ENCODE measurements at regions of chr11 and their contacts with region 1.

Region 1: GRCh38 chr11:94968334-94968958 is 4.9 kb downstream of the CWC15 start:
- DNase-seq: no peak
- ATAC-seq: peak in 1 of 4 donors; percentile 42
- H3K4me3 ChIP-seq: no peak overlapping the region
- H3K27ac ChIP-seq: no peak overlapping the region
- H3K4me1 ChIP-seq: peaks cover 0 to 10% (median 6%) of the 10 kb centered on the region in 4 donors
- H3K27me3 ChIP-seq: no peaks in the 10 kb centered on the region
- CTCF ChIP-seq: peak; percentile 47 to 62 (median 58)
- POLR2A ChIP-seq: no peak

Region 2: DNA sequence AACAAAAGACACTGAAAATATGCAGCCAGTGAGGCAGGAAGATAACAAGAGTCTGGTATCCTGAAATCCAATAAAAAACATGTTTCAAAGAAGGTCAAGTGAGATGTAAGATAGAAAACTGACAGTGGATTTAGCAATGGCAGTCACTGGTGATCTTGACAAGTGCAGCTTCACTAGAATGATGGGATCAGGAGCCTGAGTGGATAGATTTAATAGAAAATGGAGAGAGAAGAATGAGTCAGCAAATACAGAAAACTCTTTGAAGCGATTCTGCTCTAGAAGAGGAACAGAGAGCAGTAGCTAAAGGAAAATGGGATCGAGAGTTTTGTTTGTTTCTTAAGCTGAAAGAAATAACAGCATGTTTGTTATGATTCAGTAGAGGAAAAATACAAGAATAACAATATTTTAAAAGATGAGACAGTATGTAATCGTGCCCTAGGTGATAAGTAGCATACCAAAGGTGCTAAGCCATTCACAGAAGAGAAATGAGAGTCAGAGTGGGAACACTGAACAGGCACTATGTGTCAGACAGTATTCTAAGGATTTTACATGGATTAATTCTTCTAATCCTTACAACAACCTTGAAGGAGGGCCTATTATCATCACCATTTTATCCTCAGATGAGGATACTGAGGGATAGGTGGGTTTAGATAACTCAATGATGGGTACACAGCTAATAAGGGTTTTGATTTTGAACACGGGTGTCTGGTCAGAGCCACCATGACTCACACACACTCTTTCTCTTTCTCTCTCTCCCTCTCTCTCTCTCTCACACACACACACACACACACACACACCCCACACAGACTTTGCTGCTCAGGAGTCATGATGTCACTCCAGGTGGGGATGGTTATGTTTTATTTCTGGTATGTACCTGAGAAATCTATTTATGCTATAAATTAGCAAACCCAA is 511.1 kb before region 1 on chr11:
- intact Hi-C with region 1: no loop called
- DNase-seq: no peak
- ATAC-seq: no peak
- H3K4me3 ChIP-seq: no peak overlapping the region
- H3K27ac ChIP-seq: no peak overlapping the region
- H3K4me1 ChIP-seq: no peaks in the 10 kb centered on the region
- H3K27me3 ChIP-seq: no peaks in the 10 kb centered on the region
- CTCF ChIP-seq: no peak
- POLR2A ChIP-seq: no peak

Region 3: GRCh38 chr11:94623120-94623735 is 345.2 kb before region 1 on chr11:
- intact Hi-C with region 1: loop called in 1 of 2 experiments (anchors 10 kb)
- DNase-seq: peak in 1 of 3 donors; percentile 56
- ATAC-seq: peak; percentile 99 to 100 (median 100)
- H3K4me3 ChIP-seq: no peak overlapping the region
- H3K27ac ChIP-seq: no peak overlapping the region
- H3K4me1 ChIP-seq: no peaks in the 10 kb centered on the region
- H3K27me3 ChIP-seq: no peaks in the 10 kb centered on the region
- CTCF ChIP-seq: peak; percentile 71 to 88 (median 79)
- POLR2A ChIP-seq: no peak

Region 4: GRCh38 chr11:95138448-95138847 is 170.0 kb after region 1 on chr11:
- intact Hi-C with region 1: no loop called
- DNase-seq: no peak
- ATAC-seq: peak in 3 of 4 donors; percentile 30 to 55 (median 46)
- H3K4me3 ChIP-seq: no peak overlapping the region
- H3K27ac ChIP-seq: no peak overlapping the region
- H3K4me1 ChIP-seq: no peaks in the 10 kb centered on the region
- H3K27me3 ChIP-seq: no peaks in the 10 kb centered on the region
- CTCF ChIP-seq: peak in 2 of 4 donors; percentile 19 to 24
- POLR2A ChIP-seq: no peak

Region 5: DNA sequence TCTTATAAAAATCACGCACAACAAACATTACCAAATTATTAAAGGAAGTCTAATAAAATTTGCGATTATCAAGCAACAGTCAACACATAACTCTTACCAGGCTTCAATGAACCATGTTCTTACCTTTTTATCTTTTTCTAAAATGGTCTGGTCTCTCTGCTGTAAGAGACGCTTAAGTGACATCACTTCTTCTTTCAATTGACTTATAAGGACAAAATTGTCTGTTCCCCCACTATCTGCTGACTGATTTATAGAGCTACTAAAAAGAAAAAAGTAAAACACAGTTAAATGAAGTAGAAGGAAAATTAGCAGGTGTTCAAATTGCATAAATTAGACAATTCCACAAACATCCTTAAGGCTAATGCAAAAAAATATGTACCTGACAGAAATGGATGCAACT is 810.3 kb after region 1 on chr11:
- intact Hi-C with region 1: loop called in 1 of 2 experiments (anchors 10 kb)
- DNase-seq: no peak
- ATAC-seq: no peak
- H3K4me3 ChIP-seq: no peak overlapping the region
- H3K27ac ChIP-seq: no peak overlapping the region
- H3K4me1 ChIP-seq: no peaks in the 10 kb centered on the region
- H3K27me3 ChIP-seq: no peaks in the 10 kb centered on the region
- CTCF ChIP-seq: no peak
- POLR2A ChIP-seq: no peak